ENCODE measurements at regions of chr12 and their contacts with region 1.

Region 1: DNA sequence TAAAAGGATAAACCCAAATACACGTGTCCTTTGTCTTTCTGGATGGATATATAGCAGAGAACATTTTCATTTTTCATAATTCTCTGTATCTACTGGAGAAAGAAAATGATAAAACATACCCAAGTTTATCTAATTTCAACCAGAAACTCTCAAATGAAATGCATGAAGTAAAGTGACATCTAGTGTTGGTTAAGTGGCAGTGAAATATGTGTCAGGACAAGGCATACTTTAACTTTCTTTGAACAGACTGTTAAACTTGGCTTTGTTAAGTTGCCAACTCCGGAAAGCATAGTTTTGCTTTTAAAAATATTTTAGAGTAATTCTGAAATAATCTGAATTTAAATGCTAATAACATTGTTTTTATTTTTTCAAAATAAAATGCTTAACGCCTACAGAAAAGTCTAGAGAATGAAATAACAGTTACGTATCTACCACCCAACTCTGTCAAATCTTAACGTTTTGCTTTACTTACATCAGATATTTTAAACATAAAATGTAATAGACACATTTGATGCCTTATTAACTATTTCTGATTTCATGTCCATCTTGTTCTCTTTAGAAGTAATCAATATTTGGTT is 25.2 kb upstream of the NTN4 start:
- DNase-seq: no peak
- H3K4me3 Mint-ChIP-seq: no peak overlapping the region
- H3K27ac Mint-ChIP-seq: no peak overlapping the region
- H3K4me1 Mint-ChIP-seq: no peaks in the 10 kb centered on the region
- H3K27me3 Mint-ChIP-seq: peaks cover 21% of the 10 kb centered on the region

Region 2: DNA sequence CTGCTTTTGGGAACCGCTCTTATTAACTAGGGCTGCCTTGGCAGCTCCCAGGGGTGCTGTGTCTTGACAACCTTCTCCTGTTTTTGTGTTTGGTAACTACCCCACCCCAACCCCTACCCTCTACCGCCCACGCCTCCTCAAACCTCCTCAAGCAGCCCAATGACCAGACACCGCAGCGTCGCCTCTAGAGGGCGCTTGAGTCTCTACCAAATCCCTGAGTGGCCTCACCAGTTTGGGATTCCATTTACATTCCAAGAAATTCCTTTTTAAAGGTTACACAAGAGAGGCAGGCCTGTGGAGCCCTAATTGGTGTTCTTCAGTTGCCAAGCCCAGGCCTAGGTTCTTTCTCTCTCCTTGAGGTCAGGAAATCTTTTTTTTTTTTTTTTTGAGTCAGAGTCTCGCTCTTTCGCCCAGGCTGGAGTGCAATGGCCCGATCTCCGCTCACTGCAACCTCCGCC is 192.1 kb before region 1 on chr12:
- intact Hi-C with region 1: loop called (anchors 10 kb)
- DNase-seq: no peak
- H3K4me3 Mint-ChIP-seq: no peak overlapping the region
- H3K27ac Mint-ChIP-seq: no peak overlapping the region
- H3K4me1 Mint-ChIP-seq: no peaks in the 10 kb centered on the region
- H3K27me3 Mint-ChIP-seq: no peaks in the 10 kb centered on the region

Region 3: GRCh38 chr12:95674631-95675030 is 141.1 kb before region 1 on chr12:
- intact Hi-C with region 1: no loop called
- DNase-seq: no peak
- H3K4me3 Mint-ChIP-seq: no peak overlapping the region
- H3K27ac Mint-ChIP-seq: no peak overlapping the region
- H3K4me1 Mint-ChIP-seq: no peaks in the 10 kb centered on the region
- H3K27me3 Mint-ChIP-seq: no peaks in the 10 kb centered on the region